Left lung (tissue), 14 donors: ENCODE measurements at regions of chr19 and their contacts with region 1.

Region 1: GRCh38 chr19:5031231-5032100 is 62.6 kb downstream of the KDM4B start:
- DNase-seq: peak; percentile 65 to 94 (median 82)
- ATAC-seq: peak; percentile 94
- H3K4me3 ChIP-seq: no peak overlapping the region
- H3K27ac ChIP-seq: no peak overlapping the region
- H3K4me1 ChIP-seq: peaks cover 0 to 27% of the 10 kb centered on the region in 2 donors
- H3K27me3 ChIP-seq: no peaks in the 10 kb centered on the region
- CTCF ChIP-seq: peak; percentile 95 to 96

Region 2: GRCh38 chr19:4803736-4804695 is 227.4 kb before region 1 on chr19:
- intact Hi-C with region 1: loop called in 1 of 2 experiments (anchors 10 kb)
- DNase-seq: peak in 3 of 4 donors; percentile 54 to 87 (median 64)
- ATAC-seq: peak; percentile 58
- H3K4me3 ChIP-seq: no peak overlapping the region
- H3K27ac ChIP-seq: no peak overlapping the region
- H3K4me1 ChIP-seq: peaks cover 3 to 25% of the 10 kb centered on the region in 2 donors
- H3K27me3 ChIP-seq: no peaks in the 10 kb centered on the region
- CTCF ChIP-seq: peak; percentile 59 to 69

Region 3: DNA sequence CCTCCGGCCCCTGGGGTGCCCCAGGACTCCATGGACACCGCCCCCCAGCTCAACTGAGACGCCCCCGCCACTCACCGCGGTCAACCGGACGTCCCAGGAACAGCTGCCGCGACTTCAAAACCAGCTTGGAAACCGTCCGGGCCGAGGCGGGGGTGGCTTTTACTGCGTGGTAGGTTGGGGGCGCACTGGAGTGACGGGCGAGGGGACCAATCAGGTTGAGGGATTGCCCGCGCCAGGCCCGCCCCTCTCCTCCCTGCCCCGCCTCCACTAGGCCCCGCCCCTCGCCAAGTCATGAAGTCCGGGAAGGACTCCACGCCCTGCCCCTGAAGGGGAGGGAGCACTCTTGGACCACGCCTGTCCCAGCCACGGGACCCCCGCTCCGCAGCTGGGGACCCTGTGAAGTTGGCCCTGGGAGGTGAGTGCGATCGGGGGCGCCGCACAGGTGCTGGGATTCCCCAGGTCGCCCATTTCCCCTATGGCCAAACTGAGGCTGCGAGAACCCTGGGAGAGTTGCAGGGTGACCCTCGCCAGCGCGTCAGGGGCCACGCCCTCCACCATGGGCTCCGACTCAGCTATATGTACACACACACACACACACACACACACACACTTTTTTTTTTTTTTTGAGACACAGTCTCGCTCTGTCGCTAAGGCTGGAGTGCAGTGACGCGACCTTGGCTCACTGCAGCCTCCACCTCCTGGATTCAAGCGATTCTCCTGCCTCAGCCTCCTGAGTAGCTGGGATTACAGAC is 163.8 kb before region 1 on chr19 and contains the start of gene PLIN3:
- intact Hi-C with region 1: loop called (anchors 5 to 10 kb)
- DNase-seq: peak; percentile 95 to 98 (median 97)
- ATAC-seq: peak; percentile 97
- H3K4me3 ChIP-seq: peak within 1 kb of the TSS; percentile 67 to 85
- H3K27ac ChIP-seq: peak within 1 kb of the TSS; percentile 69 to 93
- H3K4me1 ChIP-seq: peaks cover 0 to 62% of the 10 kb centered on the region in 2 donors
- H3K27me3 ChIP-seq: no peaks in the 10 kb centered on the region
- CTCF ChIP-seq: no peak
- polyA plus RNA-seq, gene PLIN3: 37.9 to 50.2 (median 45.0) TPM

Region 4: GRCh38 chr19:4968462-4969291 is 62.8 kb before region 1 on chr19 and contains the start of gene KDM4B:
- intact Hi-C with region 1: no loop called
- DNase-seq: peak; percentile 99 to 100 (median 100)
- ATAC-seq: peak; percentile 96
- H3K4me3 ChIP-seq: peak within 1 kb of the TSS; percentile 55 to 61
- H3K27ac ChIP-seq: peak within 1 kb of the TSS; percentile 65 to 76
- H3K4me1 ChIP-seq: peaks cover 10 to 46% of the 10 kb centered on the region in 2 donors
- H3K27me3 ChIP-seq: no peaks in the 10 kb centered on the region
- CTCF ChIP-seq: no peak
- polyA plus RNA-seq, gene KDM4B: 24.6 to 37.1 (median 28.2) TPM